Sciatic nerve (tissue), 2 donors: ENCODE measurements at regions of chr7 and their contacts with region 1.

Region 1: GRCh38 chr7:774161-775109 is 47.4 kb upstream of the PRKAR1B start:
- DNase-seq: no peak
- ATAC-seq: peak; percentile 33

Region 2: GRCh38 chr7:322111-322671 is 452.2 kb before region 1 on chr7:
- intact Hi-C with region 1: loop called (anchors 5 kb)
- DNase-seq: peak; percentile 83
- ATAC-seq: peak; percentile 76

Region 3: DNA sequence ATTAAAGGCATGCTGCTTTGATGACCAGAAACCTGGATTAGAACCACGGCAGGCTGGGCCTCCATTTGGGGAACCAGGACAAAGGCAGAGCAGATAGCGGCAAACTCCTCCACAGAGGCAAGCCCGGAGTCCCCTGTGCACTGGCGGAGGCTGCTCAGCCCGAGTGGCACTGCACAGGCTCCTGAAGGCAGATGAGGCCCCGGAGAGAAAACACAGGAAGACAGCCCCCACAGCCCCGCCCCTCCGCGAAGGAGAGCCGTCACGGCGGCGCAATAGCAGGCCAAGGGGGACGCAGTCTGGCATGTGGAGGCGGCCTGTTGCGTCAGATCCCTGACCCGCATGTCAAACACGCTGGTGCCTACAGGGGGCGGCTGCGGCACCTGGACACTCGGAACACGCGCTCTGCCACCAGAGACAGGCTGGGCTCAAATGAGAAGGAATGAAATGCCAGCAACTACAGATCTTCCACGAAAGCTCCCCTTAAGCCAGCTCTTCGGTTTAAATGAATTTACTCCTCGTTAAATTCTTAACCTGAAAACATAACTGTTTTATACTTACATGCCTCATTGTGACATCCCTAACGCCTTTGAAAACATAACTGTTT is 1329.8 kb after region 1 on chr7:
- intact Hi-C with region 1: loop called (anchors 5 kb)
- DNase-seq: peak; percentile 94
- ATAC-seq: peak; percentile 93